ENCODE measurements at regions of chr7 and their contacts with region 1.

Region 1: GRCh38 chr7:105871142-105871541 is 5.3 kb downstream of the ATXN7L1 start:
- DNase-seq: peak; percentile 30
- H3K27ac ChIP-seq: peak overlapping the region; percentile 25; the same call in 1 of the 2 replicates
- CTCF ChIP-seq: no peak

Region 2: GRCh38 chr7:105853931-105854419 is 17.2 kb before region 1 on chr7:
- CTCF ChIA-PET with region 1: interaction called, 12 read pairs
- POLR2A ChIA-PET with region 1: no interaction called
- DNase-seq: no peak
- H3K27ac ChIP-seq: no peak overlapping the region
- CTCF ChIP-seq: no peak